ENCODE measurements at regions of chr4 and their contacts with region 1.

Region 1: GRCh38 chr4:139177868-139178611 is 1.0 kb upstream of the ELF2 start:
- DNase-seq: peak; percentile 93 to 95
- ATAC-seq: peak; percentile 70 to 71
- H3K4me3 ChIP-seq: peak overlapping the region; percentile 81 to 96 (median 88)
- H3K27ac ChIP-seq: peak overlapping the region; percentile 98 to 100 (median 100)
- H3K4me1 ChIP-seq: peaks cover 13 to 28% of the 10 kb centered on the region in 2 donors
- H3K27me3 ChIP-seq: no peaks in the 10 kb centered on the region
- CTCF ChIP-seq: no peak
- POLR2A ChIP-seq: peak; percentile 89 to 93

Region 2: GRCh38 chr4:139083956-139084803 is 93.9 kb before region 1 on chr4:
- in situ Hi-C with region 1: no loop called
- intact Hi-C with region 1: loop called (anchors 1 kb)
- DNase-seq: peak; percentile 81 to 91
- ATAC-seq: peak; percentile 66 to 69
- H3K4me3 ChIP-seq: peak overlapping the region; percentile 65 to 90 (median 70)
- H3K27ac ChIP-seq: peak overlapping the region; percentile 92 to 98 (median 92)
- H3K4me1 ChIP-seq: peaks cover 38 to 41% of the 10 kb centered on the region in 2 donors
- H3K27me3 ChIP-seq: no peaks in the 10 kb centered on the region
- CTCF ChIP-seq: peak in 4 of 5 experiments; percentile 23 to 56 (median 48)
- POLR2A ChIP-seq: peak; percentile 37 to 58

Region 3: GRCh38 chr4:139099366-139099982 is 78.6 kb before region 1 on chr4:
- in situ Hi-C with region 1: no loop called
- intact Hi-C with region 1: loop called (anchors 2 kb)
- DNase-seq: peak; percentile 39 to 62
- ATAC-seq: peak; percentile 85 to 89
- H3K4me3 ChIP-seq: no peak overlapping the region
- H3K27ac ChIP-seq: no peak overlapping the region
- H3K4me1 ChIP-seq: peaks cover 17 to 21% of the 10 kb centered on the region in 2 donors
- H3K27me3 ChIP-seq: no peaks in the 10 kb centered on the region
- CTCF ChIP-seq: peak; percentile 71 to 89 (median 81)
- POLR2A ChIP-seq: no peak

Region 4: GRCh38 chr4:139301113-139301820 is 123.2 kb after region 1 on chr4 and contains the start of gene NAA15:
- in situ Hi-C with region 1: loop called in 3 of 4 experiments (anchors 5 to 10 kb)
- intact Hi-C with region 1: loop called (anchors 2 kb)
- DNase-seq: peak; percentile 96 to 98
- ATAC-seq: peak; percentile 79 to 80
- H3K4me3 ChIP-seq: peak within 1 kb of the TSS; percentile 71 to 95 (median 86)
- H3K27ac ChIP-seq: peak within 1 kb of the TSS; percentile 94 to 98 (median 96)
- H3K4me1 ChIP-seq: peaks cover 50 to 60% of the 10 kb centered on the region in 2 donors
- H3K27me3 ChIP-seq: no peaks in the 10 kb centered on the region
- CTCF ChIP-seq: no peak
- POLR2A ChIP-seq: peak; percentile 89 to 95
- total RNA-seq, gene NAA15: 25.0 to 48.8 (median 37.2) TPM

Region 5: GRCh38 chr4:140237606-140237986 is 1059.6 kb after region 1 on chr4:
- in situ Hi-C with region 1: no loop called
- intact Hi-C with region 1: no loop called
- DNase-seq: peak; percentile 53 to 70
- ATAC-seq: peak; percentile 42 to 49
- H3K4me3 ChIP-seq: peak overlapping the region; percentile 25 to 45 (median 39)
- H3K27ac ChIP-seq: peak overlapping the region; percentile 84 to 90 (median 88)
- H3K4me1 ChIP-seq: peaks cover 38 to 48% of the 10 kb centered on the region in 2 donors
- H3K27me3 ChIP-seq: no peaks in the 10 kb centered on the region
- CTCF ChIP-seq: no peak
- POLR2A ChIP-seq: no peak

Measured in gastrocnemius medialis (tissue), 4 donors.